A673 (cell line): ENCODE measurements at regions of chr6 and their contacts with region 1.

Region 1: GRCh38 chr6:108835218-108835850 is 12.9 kb upstream of the ARMC2 start:
- DNase-seq: peak; percentile 81
- H3K4me3 ChIP-seq: no peak overlapping the region
- H3K27ac ChIP-seq: no peak overlapping the region
- H3K4me1 ChIP-seq: no peaks in the 10 kb centered on the region
- H3K27me3 ChIP-seq: no peaks in the 10 kb centered on the region
- CTCF ChIP-seq: peak; percentile 95

Region 2: GRCh38 chr6:108782179-108783041 is 52.9 kb before region 1 on chr6:
- CTCF ChIA-PET with region 1: no interaction called
- POLR2A ChIA-PET with region 1: no interaction called
- intact Hi-C with region 1: loop called (anchors 2 kb)
- DNase-seq: peak; percentile 83
- H3K4me3 ChIP-seq: peak overlapping the region; percentile 46
- H3K27ac ChIP-seq: no peak overlapping the region
- H3K4me1 ChIP-seq: peaks cover 18% of the 10 kb centered on the region
- H3K27me3 ChIP-seq: no peaks in the 10 kb centered on the region
- CTCF ChIP-seq: peak; percentile 91

Region 3: DNA sequence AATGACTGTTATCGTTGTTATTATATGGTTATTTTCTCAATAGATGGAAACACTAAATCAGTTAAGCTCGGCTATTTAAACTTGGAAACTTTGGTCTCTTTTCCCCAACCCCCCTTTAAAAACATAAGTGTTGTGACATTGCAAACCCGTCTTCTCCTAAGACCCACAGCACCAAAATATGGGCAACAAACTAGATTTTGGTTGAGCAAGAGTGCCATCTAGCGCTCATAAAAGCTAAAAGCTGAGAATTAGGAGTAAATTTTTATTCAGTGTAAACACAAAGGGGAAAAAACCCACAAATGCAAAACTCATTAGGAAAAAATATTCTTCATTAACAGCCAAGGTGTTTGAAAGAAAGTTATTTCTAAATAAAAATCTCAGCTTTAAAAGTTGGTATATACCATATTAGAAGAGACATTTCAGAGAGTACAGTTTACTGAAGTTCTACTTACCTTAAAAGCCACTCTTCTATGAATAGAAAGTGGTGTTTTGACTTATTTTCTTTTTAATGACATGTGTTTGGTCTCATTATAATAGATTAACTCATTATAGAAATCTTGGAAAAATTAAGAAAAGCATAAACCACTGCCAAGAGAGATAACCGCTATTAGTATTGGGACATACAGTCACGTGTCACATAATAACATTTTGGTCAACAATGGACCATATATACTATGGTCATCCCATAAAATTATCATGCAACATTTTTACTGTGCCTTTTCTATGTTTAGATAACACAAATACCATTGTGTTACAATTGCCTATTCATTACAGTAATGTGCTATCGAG is 238.2 kb after region 1 on chr6:
- CTCF ChIA-PET with region 1: no interaction called
- POLR2A ChIA-PET with region 1: no interaction called
- intact Hi-C with region 1: loop called (anchors 5 kb)
- DNase-seq: peak; percentile 77
- H3K4me3 ChIP-seq: no peak overlapping the region
- H3K27ac ChIP-seq: no peak overlapping the region
- H3K4me1 ChIP-seq: peaks cover 3% of the 10 kb centered on the region
- H3K27me3 ChIP-seq: no peaks in the 10 kb centered on the region
- CTCF ChIP-seq: peak; percentile 71